Ascending aorta (tissue), 2 donors: ENCODE measurements at regions of chr7 and their contacts with region 1.

Region 1: DNA sequence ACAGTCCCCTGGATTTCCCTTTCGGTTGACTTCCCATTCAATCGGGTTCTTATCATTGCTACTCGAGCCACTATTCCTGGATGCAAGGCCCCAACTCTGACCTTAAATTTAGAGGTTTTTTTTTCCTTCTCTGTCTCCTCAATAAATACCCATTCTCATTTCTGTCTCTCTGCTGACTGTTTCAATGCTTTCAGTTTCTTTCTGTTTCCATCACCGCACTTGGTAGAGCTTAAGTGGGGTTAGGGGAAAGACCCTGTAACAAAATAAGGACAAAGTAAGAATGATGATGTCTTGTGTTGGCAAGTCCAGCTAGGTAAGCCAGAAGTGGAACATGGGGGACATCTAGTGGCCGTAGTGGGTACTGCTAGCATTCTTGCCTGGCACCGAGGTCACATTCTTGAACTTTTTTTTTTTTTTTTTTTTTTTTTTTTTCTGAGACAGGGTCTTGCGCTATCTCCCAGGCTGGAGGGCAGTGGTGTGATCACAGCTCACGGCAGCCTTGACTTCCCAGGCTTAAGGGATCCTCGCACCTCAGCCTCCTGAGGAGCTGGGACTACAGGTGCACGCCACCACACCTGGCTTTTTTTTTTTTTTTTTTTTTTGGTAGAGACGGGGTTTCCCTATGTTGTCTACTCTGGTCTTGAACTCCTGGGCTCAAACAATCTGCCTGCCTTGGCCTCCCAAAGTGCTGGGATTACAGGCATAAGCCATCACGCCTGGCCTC is 40.3 kb downstream of the ZC3HC1 start:
- DNase-seq: peak; percentile 43 to 92
- H3K4me3 ChIP-seq: no peak overlapping the region
- H3K27ac ChIP-seq: peak overlapping the region; percentile 75 to 78
- H3K4me1 ChIP-seq: peaks cover 10 to 13% of the 10 kb centered on the region in 2 donors
- H3K27me3 ChIP-seq: no peaks in the 10 kb centered on the region
- CTCF ChIP-seq: peak; percentile 84 to 90 (median 90)

Region 2: DNA sequence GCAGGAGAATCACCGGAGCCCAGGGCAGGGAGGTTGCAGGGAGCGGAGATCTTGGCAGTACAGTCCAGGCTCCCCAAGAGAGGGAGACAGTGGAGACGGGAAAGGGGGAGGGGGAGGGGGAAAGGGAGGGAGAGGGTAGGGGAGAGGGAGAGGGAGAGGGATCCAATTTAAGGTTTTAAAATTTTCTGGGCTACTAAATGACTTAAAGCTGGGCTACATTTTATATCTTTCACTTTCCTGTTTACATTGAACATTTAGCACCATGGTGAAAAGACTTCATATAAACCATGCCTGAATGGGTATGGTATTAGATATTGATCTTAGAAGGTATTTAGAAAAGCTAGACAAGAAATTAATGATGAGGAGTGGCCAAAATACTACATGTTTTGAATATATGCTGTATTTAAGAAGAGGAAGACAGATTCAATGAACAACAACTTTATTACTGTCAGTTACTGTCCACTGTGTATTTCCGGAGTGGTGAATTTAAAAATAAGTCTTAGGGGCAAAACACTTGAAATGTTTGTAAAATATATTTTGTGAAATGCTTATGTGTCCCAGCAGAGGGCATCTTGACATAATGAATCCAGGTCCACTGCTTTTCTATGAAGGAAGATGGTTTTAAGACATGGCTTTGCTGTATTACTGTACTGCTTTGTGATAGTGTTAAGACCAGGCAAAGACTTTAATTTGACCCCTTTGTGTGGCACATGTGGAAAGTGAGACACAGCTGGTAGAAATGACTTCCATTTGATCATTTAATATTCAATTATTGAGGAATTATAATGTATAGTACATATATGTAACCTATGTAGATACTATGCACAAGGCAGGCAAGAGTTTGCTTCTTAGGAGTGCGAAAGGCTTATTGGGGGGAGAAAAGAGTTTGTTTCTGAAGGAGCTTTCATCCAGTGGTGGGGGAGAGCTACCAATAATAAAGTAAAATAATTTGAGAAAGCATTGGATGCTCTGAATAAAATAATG is 346.5 kb before region 1 on chr7:
- intact Hi-C with region 1: loop called (anchors 5 kb)
- DNase-seq: no peak
- H3K4me3 ChIP-seq: no peak overlapping the region
- H3K27ac ChIP-seq: no peak overlapping the region
- H3K4me1 ChIP-seq: no peaks in the 10 kb centered on the region
- H3K27me3 ChIP-seq: no peaks in the 10 kb centered on the region
- CTCF ChIP-seq: peak; percentile 22 to 38 (median 22)

Region 3: DNA sequence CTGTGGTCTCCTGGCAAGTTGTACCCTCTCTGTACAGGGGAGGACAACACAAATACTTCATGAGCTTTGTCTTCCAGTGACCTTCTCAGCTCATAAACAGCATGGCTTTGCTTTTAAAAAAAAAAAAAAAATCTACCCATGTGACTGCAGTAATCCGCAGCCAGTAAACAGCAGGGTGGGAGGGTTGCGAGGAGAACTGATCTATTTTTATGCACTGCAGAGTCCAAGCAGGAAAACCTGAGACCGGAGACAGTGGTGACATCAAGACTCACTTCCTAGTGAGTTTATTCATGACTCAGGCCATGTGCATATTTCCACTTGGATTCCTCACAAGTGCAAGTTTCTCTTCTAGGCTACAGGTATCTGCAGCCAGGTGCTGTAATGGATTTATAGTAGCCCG is 271.4 kb before region 1 on chr7:
- intact Hi-C with region 1: loop called (anchors 10 kb)
- DNase-seq: no peak
- H3K4me3 ChIP-seq: no peak overlapping the region
- H3K27ac ChIP-seq: no peak overlapping the region
- H3K4me1 ChIP-seq: no peaks in the 10 kb centered on the region
- H3K27me3 ChIP-seq: no peaks in the 10 kb centered on the region
- CTCF ChIP-seq: no peak